Sigmoid colon (tissue), 7 donors: ENCODE measurements at regions of chr10 and their contacts with region 1.

Region 1: GRCh38 chr10:116733566-116733965 is 8.8 kb downstream of the HSPA12A start:
- DNase-seq: no peak
- H3K4me3 ChIP-seq: no peak overlapping the region
- H3K27ac ChIP-seq: peak overlapping the region in 1 of 4 donors; percentile 12
- H3K4me1 ChIP-seq: peaks cover 0 to 6% (median 0%) of the 10 kb centered on the region in 4 donors
- H3K27me3 ChIP-seq: no peaks in the 10 kb centered on the region
- CTCF ChIP-seq: no peak
- EP300 ChIP-seq: no peak
- POLR2A ChIP-seq: no peak

Region 2: DNA sequence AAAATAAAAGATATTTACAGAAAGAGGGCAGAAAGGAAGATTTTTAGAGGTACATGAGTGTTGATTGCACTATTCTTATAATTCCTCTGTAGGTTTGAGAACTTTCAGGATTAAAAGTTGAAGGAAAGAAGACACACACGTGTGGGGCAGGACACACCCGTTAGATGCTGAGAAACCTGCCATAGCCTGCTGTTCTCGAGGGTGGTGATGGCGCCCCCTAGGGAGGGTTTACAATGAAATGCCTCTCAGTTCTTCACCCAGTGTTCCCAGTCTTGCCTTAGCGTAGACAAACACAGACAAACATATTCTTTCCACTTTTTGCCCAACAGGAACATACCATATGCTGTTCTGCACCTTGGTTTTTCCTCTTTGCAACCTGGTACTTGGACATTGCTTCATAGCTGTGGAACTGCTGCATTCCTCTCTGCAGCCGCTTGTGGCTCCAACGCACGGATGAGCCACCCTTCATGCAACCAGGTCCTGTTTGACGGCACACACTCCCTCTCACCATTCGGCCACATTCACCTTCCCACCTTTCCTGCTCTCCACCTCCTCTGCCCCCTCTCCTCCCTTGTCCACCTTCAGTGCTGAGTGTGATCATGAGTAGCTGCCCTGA is 32.1 kb after region 1 on chr10:
- intact Hi-C with region 1: loop called (anchors 5 kb)
- DNase-seq: peak; percentile 65
- H3K4me3 ChIP-seq: no peak overlapping the region
- H3K27ac ChIP-seq: no peak overlapping the region
- H3K4me1 ChIP-seq: no peaks in the 10 kb centered on the region
- H3K27me3 ChIP-seq: no peaks in the 10 kb centered on the region
- CTCF ChIP-seq: peak in 2 of 4 experiments; percentile 11 to 21
- EP300 ChIP-seq: no peak
- POLR2A ChIP-seq: no peak